ENCODE measurements at regions of chr9 and their contacts with region 1.

Region 1: GRCh38 chr9:17031546-17031945 is 103.3 kb upstream of the CNTLN start:
- DNase-seq: no peak
- H3K4me3 ChIP-seq: no peak overlapping the region
- H3K27ac ChIP-seq: no peak overlapping the region
- H3K4me1 ChIP-seq: no peaks in the 10 kb centered on the region
- H3K27me3 ChIP-seq: no peaks in the 10 kb centered on the region
- CTCF ChIP-seq: no peak
- EP300 ChIP-seq: no peak
- POLR2A ChIP-seq: no peak

Region 2: GRCh38 chr9:17082343-17083064 is 51.0 kb after region 1 on chr9:
- in situ Hi-C with region 1: no loop called
- intact Hi-C with region 1: no loop called
- DNase-seq: no peak
- H3K4me3 ChIP-seq: no peak overlapping the region
- H3K27ac ChIP-seq: no peak overlapping the region
- H3K4me1 ChIP-seq: no peaks in the 10 kb centered on the region
- H3K27me3 ChIP-seq: no peaks in the 10 kb centered on the region
- CTCF ChIP-seq: no peak
- EP300 ChIP-seq: no peak
- POLR2A ChIP-seq: no peak

Region 3: GRCh38 chr9:17134396-17135294 is 103.1 kb after region 1 on chr9 and contains the start of gene CNTLN:
- in situ Hi-C with region 1: no loop called
- intact Hi-C with region 1: no loop called
- DNase-seq: peak; percentile 93
- H3K4me3 ChIP-seq: peak within 1 kb of the TSS; percentile 48 to 78 (median 72)
- H3K27ac ChIP-seq: peak within 1 kb of the TSS; percentile 78 to 90 (median 83)
- H3K4me1 ChIP-seq: peaks cover 0 to 13% (median 0%) of the 10 kb centered on the region in 4 donors
- H3K27me3 ChIP-seq: no peaks in the 10 kb centered on the region
- CTCF ChIP-seq: no peak
- EP300 ChIP-seq: no peak
- POLR2A ChIP-seq: peak; percentile 37
- total RNA-seq, gene CNTLN: 1.6 to 7.0 (median 2.4) TPM

Region 4: GRCh38 chr9:17587113-17587512 is 555.6 kb after region 1 on chr9:
- in situ Hi-C with region 1: no loop called
- intact Hi-C with region 1: loop called (anchors 10 kb)
- DNase-seq: no peak
- H3K4me3 ChIP-seq: no peak overlapping the region
- H3K27ac ChIP-seq: no peak overlapping the region
- H3K4me1 ChIP-seq: no peaks in the 10 kb centered on the region
- H3K27me3 ChIP-seq: peaks cover 7% of the 10 kb centered on the region
- CTCF ChIP-seq: no peak
- EP300 ChIP-seq: no peak
- POLR2A ChIP-seq: no peak